Posterior cingulate gyrus (tissue), 11 donors: ENCODE measurements at regions of chr17 and their contacts with region 1.

Region 1: GRCh38 chr17:8409966-8410864 is 12.6 kb upstream of the RNF222 start:
- DNase-seq: peak; percentile 73 to 98 (median 92)

Region 2: DNA sequence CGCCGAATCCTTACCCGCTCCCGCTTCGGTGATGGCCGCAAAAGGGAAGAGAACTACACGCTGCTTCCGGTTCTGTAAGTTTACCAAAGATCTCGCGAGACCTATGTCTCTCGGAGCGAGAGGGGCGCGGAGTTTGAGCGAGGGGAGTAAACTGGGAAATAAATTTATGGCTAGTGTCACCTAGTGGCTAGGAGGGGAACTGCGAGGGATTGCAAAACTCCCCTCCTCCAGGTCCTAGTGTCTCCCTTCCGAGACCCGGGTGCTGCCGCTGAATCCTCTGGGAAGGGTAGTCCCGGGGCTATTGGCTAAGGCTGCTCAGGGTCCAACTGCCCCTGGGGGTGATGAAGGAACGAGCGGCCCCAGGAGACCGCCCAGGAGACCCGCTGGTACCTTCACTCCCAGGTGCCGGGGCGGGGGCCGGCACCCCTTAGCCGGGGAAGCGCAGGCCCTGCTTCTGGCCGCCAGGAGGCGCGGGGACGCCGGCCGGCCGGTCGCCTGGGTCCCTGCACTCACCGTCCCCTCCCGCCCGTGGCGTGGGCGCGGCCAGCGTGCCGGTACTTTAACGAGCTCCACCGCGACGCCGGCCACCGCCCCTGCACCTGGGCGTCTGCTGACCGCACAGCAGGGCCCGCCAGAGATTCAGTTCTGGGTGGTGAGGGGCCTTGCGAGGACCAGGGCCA is 26.9 kb before region 1 on chr17 and contains the start of gene RPL26:
- intact Hi-C with region 1: no loop called
- DNase-seq: peak; percentile 90 to 99 (median 94)

Region 3: GRCh38 chr17:8479431-8479947 is 69.3 kb after region 1 on chr17:
- intact Hi-C with region 1: loop called (anchors 2 kb)
- DNase-seq: peak; percentile 66 to 97 (median 72)

Region 4: DNA sequence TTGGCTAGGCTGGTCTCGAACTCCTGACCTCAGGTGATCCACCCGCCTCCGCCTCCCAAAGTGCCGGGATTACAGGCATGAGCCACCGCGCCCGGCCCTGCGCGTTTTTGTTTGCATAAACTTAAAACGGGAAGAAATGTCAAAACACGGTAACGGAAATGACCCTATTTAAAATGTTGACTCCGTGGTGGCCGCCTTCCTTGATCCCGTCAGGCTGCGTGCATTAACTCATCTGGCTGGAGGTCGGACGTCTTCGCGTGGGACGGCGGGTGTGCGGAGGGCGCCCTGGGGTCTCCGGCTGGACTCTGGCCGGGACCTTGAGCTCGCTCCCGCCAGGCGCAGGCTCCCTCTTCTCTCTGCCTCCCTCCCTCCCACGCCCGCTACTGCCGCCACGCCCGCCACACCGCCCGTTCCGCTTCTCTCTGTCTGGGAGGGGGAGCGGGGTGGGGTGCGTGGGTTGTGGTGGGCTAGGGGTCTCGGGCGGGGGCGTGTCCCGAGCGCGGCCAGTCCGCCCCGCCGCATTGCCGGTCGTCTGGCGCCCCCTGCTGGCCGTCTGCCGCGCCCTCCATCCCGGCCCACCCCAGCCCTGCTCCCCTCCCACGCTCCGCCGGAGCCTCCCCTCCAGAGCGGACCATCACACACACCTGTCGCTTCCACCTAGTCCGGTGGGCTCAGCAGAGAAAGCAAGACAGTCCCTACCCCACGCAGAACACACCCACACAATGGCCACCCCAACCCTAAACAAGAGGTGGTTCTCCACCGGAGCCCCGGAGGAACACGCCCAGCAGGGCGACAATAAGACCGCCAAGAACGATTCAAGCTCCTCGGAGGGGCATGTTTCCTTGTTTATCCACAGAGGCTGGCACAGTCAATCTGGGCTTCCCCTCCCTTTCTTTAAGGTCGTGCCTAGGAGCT is 335.6 kb after region 1 on chr17:
- intact Hi-C with region 1: loop called (anchors 1 kb)
- DNase-seq: peak in 9 of 10 donors; percentile 36 to 93 (median 73)

Region 5: DNA sequence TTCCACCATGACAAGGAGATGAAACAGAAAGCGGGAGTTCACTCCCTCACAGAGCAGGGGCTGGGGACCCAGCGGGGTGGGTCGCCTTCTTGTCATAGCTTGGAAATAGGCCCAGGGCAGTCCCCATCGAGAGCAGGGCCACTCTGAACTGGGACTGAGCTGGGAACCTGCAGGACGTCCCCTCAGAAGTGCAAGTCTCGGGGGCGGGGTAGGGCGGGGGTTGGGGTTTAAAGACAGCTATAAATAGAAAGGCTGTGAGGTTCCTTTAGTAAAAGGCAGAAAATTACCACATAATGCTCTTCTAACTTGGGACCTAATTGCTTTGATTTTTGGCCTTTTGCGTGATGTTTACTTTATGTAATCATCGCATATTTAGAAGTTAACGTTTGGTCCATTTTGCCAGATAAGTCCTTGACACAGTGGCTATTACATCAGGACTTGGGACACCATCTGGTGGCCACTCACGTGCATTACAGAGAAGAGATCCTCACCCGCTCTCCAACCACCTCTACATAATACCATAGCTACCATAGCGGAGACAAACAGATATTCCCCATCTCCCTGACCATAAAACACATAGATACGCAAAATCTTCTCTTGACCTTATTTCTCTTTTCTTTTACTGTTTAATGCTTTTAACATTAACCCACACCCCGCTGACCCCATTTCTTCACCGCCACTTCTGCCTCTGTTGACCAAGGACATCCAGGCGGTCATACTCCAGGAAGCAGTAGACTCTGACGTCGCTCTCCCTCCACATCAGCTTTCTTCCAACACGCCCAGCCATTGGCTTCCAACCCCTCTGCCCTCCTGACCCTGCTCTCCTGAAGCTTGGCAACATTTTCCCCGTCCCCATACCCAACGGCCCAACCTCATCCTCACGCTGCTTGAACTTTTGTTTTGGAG is 484.7 kb after region 1 on chr17:
- intact Hi-C with region 1: loop called (anchors 10 kb)
- DNase-seq: peak in 6 of 10 donors; percentile 32 to 77 (median 49)